ENCODE measurements at regions of chr17 and their contacts with region 1.

Region 1: GRCh38 chr17:48351831-48352332 is 78.1 kb downstream of the SKAP1 start:
- DNase-seq: peak; percentile 65
- ATAC-seq: peak; percentile 28
- H3K4me3 ChIP-seq: no peak overlapping the region
- H3K4me3 Mint-ChIP-seq: no peak overlapping the region
- H3K27ac ChIP-seq: no peak overlapping the region
- H3K27ac Mint-ChIP-seq: no peak overlapping the region
- H3K4me1 ChIP-seq: peaks cover 3% of the 10 kb centered on the region in 2 donors
- H3K4me1 Mint-ChIP-seq: peaks cover 4% of the 10 kb centered on the region
- H3K27me3 ChIP-seq: no peaks in the 10 kb centered on the region
- H3K27me3 Mint-ChIP-seq: no peaks in the 10 kb centered on the region
- CTCF ChIP-seq: peak; percentile 95

Region 2: DNA sequence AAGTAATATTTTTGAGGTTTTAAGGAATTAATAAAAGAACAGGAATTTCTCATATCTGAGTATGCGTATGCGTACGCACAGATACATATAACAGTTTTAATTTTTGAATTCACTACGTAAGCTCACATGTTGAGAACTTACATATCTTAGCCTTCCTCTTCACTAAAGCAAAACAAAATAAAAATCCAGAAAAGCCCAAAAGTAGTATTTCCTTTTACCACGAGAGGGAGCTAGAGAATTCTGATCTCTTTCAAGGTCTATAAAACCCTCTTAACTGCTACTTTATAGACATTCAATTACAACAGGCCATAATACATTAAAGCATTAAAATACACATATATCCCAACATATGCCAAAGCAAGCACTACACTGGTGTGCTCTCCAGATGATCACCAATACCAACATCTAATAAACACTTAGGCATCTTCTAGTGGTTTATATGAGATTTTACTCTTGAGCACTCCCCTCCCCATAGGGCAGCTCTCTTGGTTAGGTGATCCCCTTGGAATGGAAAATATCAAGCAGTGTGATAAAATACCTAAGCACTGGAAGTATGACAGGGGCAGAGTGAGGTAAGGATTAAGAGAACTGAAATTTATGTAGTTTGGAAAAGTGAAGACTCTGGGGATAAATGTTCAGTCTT is 15.9 kb before region 1 on chr17:
- CTCF ChIA-PET with region 1: interaction called, 39 read pairs
- POLR2A ChIA-PET with region 1: no interaction called
- intact Hi-C with region 1: no loop called
- DNase-seq: peak; percentile 79
- ATAC-seq: peak; percentile 47
- H3K4me3 ChIP-seq: no peak overlapping the region
- H3K4me3 Mint-ChIP-seq: no peak overlapping the region
- H3K27ac ChIP-seq: no peak overlapping the region
- H3K27ac Mint-ChIP-seq: no peak overlapping the region
- H3K4me1 ChIP-seq: no peaks in the 10 kb centered on the region
- H3K4me1 Mint-ChIP-seq: no peaks in the 10 kb centered on the region
- H3K27me3 ChIP-seq: no peaks in the 10 kb centered on the region
- H3K27me3 Mint-ChIP-seq: peaks cover 4% of the 10 kb centered on the region
- CTCF ChIP-seq: peak; percentile 91

Region 3: GRCh38 chr17:48374650-48375230 is 22.9 kb after region 1 on chr17:
- CTCF ChIA-PET with region 1: interaction called, 27 read pairs
- POLR2A ChIA-PET with region 1: no interaction called
- intact Hi-C with region 1: no loop called
- DNase-seq: peak; percentile 48
- ATAC-seq: peak; percentile 48
- H3K4me3 ChIP-seq: no peak overlapping the region
- H3K4me3 Mint-ChIP-seq: no peak overlapping the region
- H3K27ac ChIP-seq: peak overlapping the region in 1 of 2 donors; percentile 36
- H3K27ac Mint-ChIP-seq: peak overlapping the region; percentile 47
- H3K4me1 ChIP-seq: peaks cover 23% of the 10 kb centered on the region in 2 donors
- H3K4me1 Mint-ChIP-seq: peaks cover 24% of the 10 kb centered on the region
- H3K27me3 ChIP-seq: no peaks in the 10 kb centered on the region
- H3K27me3 Mint-ChIP-seq: no peaks in the 10 kb centered on the region
- CTCF ChIP-seq: peak; percentile 50

Region 4: DNA sequence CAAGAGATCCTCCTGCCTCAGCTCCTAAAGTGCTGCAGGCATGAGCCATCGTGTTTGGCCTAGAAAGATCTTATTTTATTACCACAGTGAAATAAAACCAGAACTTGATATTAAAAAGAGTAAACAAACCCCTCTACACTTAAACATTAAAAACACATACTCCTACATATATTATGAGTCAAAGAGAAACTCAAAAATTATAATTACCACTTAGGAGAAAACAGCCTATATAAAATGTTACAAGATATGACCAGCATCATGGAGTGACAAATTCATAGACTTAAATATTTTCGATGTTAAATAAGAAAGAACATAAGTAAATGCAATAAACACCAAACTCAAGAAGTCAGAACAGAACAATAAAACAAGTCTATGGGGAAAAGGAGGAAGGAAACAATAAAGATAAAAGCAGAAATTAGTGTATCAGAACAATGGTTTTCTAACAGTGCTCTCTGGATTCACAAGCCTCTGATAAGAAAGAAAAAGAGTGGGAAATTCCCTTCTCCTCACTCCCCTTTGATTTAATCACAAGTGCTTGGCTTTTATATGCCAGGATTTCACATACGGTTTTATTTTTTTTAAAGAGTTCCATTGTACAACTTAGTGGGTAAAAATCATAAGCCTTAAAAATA is 55.2 kb after region 1 on chr17:
- CTCF ChIA-PET with region 1: no interaction called
- POLR2A ChIA-PET with region 1: no interaction called
- intact Hi-C with region 1: loop called (anchors 10 kb)
- DNase-seq: no peak
- ATAC-seq: no peak
- H3K4me3 ChIP-seq: no peak overlapping the region
- H3K4me3 Mint-ChIP-seq: peak overlapping the region; percentile 13
- H3K27ac ChIP-seq: no peak overlapping the region
- H3K27ac Mint-ChIP-seq: no peak overlapping the region
- H3K4me1 ChIP-seq: peaks cover 14 to 16% of the 10 kb centered on the region in 2 donors
- H3K4me1 Mint-ChIP-seq: peaks cover 34% of the 10 kb centered on the region
- H3K27me3 ChIP-seq: no peaks in the 10 kb centered on the region
- H3K27me3 Mint-ChIP-seq: no peaks in the 10 kb centered on the region
- CTCF ChIP-seq: no peak

Region 5: GRCh38 chr17:48593840-48594537 is 242.1 kb after region 1 on chr17:
- CTCF ChIA-PET with region 1: interaction called, 68 read pairs
- POLR2A ChIA-PET with region 1: no interaction called
- intact Hi-C with region 1: no loop called
- DNase-seq: peak; percentile 87
- ATAC-seq: peak; percentile 68
- H3K4me3 ChIP-seq: peak overlapping the region in 2 of 5 experiments; percentile 21 to 44
- H3K4me3 Mint-ChIP-seq: peak overlapping the region; percentile 83
- H3K27ac ChIP-seq: no peak overlapping the region
- H3K27ac Mint-ChIP-seq: no peak overlapping the region
- H3K4me1 ChIP-seq: peaks cover 61 to 70% of the 10 kb centered on the region in 2 donors
- H3K4me1 Mint-ChIP-seq: peaks cover 58% of the 10 kb centered on the region
- H3K27me3 ChIP-seq: peaks cover 0 to 99% (median 80%) of the 10 kb centered on the region in 4 experiments
- H3K27me3 Mint-ChIP-seq: peaks cover 90% of the 10 kb centered on the region
- CTCF ChIP-seq: peak; percentile 89

Measured in B cell (primary cell).